ENCODE measurements at regions of chr1 and their contacts with region 1.

Region 1: DNA sequence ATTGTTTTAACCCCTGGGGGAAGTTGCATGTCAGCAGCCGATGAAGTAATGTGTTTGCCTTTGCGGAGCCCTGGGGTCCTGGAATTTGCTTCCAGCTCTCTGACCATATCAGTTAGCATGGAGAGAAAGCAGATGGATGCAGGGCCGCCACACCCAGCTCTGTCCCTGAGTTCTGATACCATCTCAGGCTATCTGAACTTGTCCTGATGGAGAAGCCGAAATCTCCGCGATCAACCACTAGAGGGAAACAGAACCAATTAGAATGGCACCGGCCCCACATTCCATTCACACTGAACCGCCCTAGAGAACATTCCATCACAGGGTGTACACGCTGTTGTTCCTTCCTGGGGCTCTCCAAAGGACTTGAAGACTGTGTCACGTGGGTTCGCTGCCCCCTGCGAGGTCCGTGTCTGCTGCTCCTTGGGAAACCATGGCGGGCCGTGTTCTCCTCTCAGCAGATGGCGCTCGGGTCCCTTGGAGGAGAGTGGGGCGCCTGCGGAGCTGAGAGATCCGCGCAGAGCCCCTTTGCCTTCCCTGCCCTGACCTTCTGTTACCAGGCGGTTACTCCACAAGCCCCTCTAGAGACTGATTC is 75.4 kb downstream of the ABCA4 start:
- DNase-seq: peak; percentile 96
- H3K4me3 ChIP-seq: peak overlapping the region; percentile 13
- H3K27ac ChIP-seq: no peak overlapping the region
- H3K4me1 ChIP-seq: peaks cover 17% of the 10 kb centered on the region
- H3K27me3 ChIP-seq: no peaks in the 10 kb centered on the region
- CTCF ChIP-seq: peak; percentile 87

Region 2: GRCh38 chr1:93909146-93910050 is 136.2 kb before region 1 on chr1 and contains the start of gene GCLM:
- CTCF ChIA-PET with region 1: no interaction called
- POLR2A ChIA-PET with region 1: no interaction called
- intact Hi-C with region 1: no loop called
- DNase-seq: peak; percentile 94
- H3K4me3 ChIP-seq: peak within 1 kb of the TSS; percentile 89
- H3K27ac ChIP-seq: peak within 1 kb of the TSS; percentile 82
- H3K4me1 ChIP-seq: peaks cover 37% of the 10 kb centered on the region
- H3K27me3 ChIP-seq: no peaks in the 10 kb centered on the region
- CTCF ChIP-seq: peak; percentile 86
- total RNA-seq, gene GCLM: 27.5 and 34.4 TPM in 2 replicates

Region 3: GRCh38 chr1:94068999-94069918 is 23.7 kb after region 1 on chr1:
- CTCF ChIA-PET with region 1: no interaction called
- POLR2A ChIA-PET with region 1: interaction called, 10 read pairs
- intact Hi-C with region 1: no loop called
- DNase-seq: peak; percentile 80
- H3K4me3 ChIP-seq: no peak overlapping the region
- H3K27ac ChIP-seq: no peak overlapping the region
- H3K4me1 ChIP-seq: peaks cover 27% of the 10 kb centered on the region
- H3K27me3 ChIP-seq: no peaks in the 10 kb centered on the region
- CTCF ChIP-seq: no peak

Region 4: GRCh38 chr1:94237291-94238226 is 192.0 kb after region 1 on chr1 and contains the start of gene ARHGAP29:
- CTCF ChIA-PET with region 1: no interaction called
- POLR2A ChIA-PET with region 1: no interaction called
- intact Hi-C with region 1: loop called (anchors 5 kb)
- DNase-seq: peak; percentile 87
- H3K4me3 ChIP-seq: peak within 1 kb of the TSS; percentile 63
- H3K27ac ChIP-seq: no peak within 1 kb of the TSS
- H3K4me1 ChIP-seq: no peaks in the 10 kb centered on the region
- H3K27me3 ChIP-seq: peaks cover 67% of the 10 kb centered on the region
- CTCF ChIP-seq: peak; percentile 23; the same call in 1 of the 2 replicates
- total RNA-seq, gene ARHGAP29: 1.7 and 1.8 TPM in 2 replicates

Region 5: GRCh38 chr1:94329986-94330385 is 284.4 kb after region 1 on chr1:
- CTCF ChIA-PET with region 1: interaction called, 74 read pairs
- POLR2A ChIA-PET with region 1: no interaction called
- intact Hi-C with region 1: no loop called
- DNase-seq: peak; percentile 61
- H3K4me3 ChIP-seq: no peak overlapping the region
- H3K27ac ChIP-seq: no peak overlapping the region
- H3K4me1 ChIP-seq: peaks cover 20% of the 10 kb centered on the region
- H3K27me3 ChIP-seq: no peaks in the 10 kb centered on the region
- CTCF ChIP-seq: peak; percentile 58

Region 6: GRCh38 chr1:94463765-94464330 is 418.3 kb after region 1 on chr1:
- CTCF ChIA-PET with region 1: no interaction called
- POLR2A ChIA-PET with region 1: no interaction called
- intact Hi-C with region 1: loop called (anchors 5 kb)
- DNase-seq: peak; percentile 70
- H3K4me3 ChIP-seq: no peak overlapping the region
- H3K27ac ChIP-seq: no peak overlapping the region
- H3K4me1 ChIP-seq: no peaks in the 10 kb centered on the region
- H3K27me3 ChIP-seq: no peaks in the 10 kb centered on the region
- CTCF ChIP-seq: peak; percentile 73

Region 7: GRCh38 chr1:94805912-94806311 is 760.4 kb after region 1 on chr1:
- CTCF ChIA-PET with region 1: no interaction called
- POLR2A ChIA-PET with region 1: no interaction called
- intact Hi-C with region 1: loop called (anchors 5 kb)
- DNase-seq: peak; percentile 70
- H3K4me3 ChIP-seq: no peak overlapping the region
- H3K27ac ChIP-seq: no peak overlapping the region
- H3K4me1 ChIP-seq: peaks cover 14% of the 10 kb centered on the region
- H3K27me3 ChIP-seq: no peaks in the 10 kb centered on the region
- CTCF ChIP-seq: peak; percentile 93